ENCODE measurements at regions of chr7 and their contacts with region 1.

Region 1: GRCh38 chr7:101363734-101364374 is 1.2 kb downstream of the COL26A1 start:
- DNase-seq: peak; percentile 65
- ATAC-seq: peak; percentile 95
- H3K4me3 ChIP-seq: peak overlapping the region; percentile 69
- H3K27ac ChIP-seq: no peak overlapping the region
- H3K4me1 ChIP-seq: no peaks in the 10 kb centered on the region
- H3K27me3 ChIP-seq: no peaks in the 10 kb centered on the region
- CTCF ChIP-seq: peak; percentile 81

Region 2: DNA sequence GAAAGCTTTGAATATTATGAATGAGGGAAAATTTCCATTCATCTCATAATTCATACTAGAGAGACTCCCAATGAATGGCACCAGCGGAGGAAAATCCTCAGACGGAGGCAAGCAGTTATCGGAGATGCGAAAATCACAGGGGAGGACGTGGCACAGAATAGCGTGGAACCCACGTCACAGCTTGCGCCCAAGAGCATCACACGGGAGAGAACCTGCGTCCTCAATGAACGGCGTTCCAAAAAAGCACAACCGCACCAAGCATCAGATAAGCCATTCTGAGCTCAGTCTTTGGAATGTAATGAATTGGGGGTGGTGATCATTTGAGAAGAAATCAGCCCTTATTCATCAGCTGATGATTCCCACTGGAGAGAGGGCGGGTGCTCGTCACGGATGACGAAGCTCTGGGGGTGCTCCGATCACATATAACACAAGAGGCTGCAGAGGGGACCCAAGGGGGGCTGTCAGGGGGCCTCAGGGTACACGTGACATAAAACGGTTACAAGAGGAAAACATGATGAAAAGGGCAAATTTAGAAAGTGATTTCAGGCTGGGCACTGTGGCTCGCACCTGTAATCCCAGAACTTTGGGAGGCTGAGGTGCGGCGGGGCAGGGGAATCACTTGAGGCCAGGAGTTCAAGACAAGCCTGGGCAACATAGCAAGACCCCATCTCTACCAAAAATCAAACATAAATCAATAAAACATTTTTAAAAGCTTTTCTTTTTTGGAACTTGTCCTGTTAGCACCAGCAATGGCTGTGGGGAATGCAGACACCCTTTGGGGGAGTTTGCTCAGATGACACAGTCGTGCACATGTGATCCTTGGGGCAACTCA is 85.2 kb before region 1 on chr7:
- CTCF ChIA-PET with region 1: no interaction called
- POLR2A ChIA-PET with region 1: no interaction called
- intact Hi-C with region 1: no loop called
- DNase-seq: no peak
- ATAC-seq: no peak
- H3K4me3 ChIP-seq: no peak overlapping the region
- H3K27ac ChIP-seq: no peak overlapping the region
- H3K4me1 ChIP-seq: no peaks in the 10 kb centered on the region; the same call in 1 of the 2 replicates
- H3K27me3 ChIP-seq: no peaks in the 10 kb centered on the region
- CTCF ChIP-seq: no peak

Region 3: GRCh38 chr7:101507791-101508252 is 144.0 kb after region 1 on chr7:
- CTCF ChIA-PET with region 1: no interaction called
- POLR2A ChIA-PET with region 1: no interaction called
- intact Hi-C with region 1: loop called (anchors 2 kb)
- DNase-seq: peak; percentile 64
- ATAC-seq: no peak
- H3K4me3 ChIP-seq: no peak overlapping the region
- H3K27ac ChIP-seq: no peak overlapping the region
- H3K4me1 ChIP-seq: no peaks in the 10 kb centered on the region
- H3K27me3 ChIP-seq: no peaks in the 10 kb centered on the region
- CTCF ChIP-seq: peak; percentile 95

Region 4: GRCh38 chr7:101542527-101543241 is 178.8 kb after region 1 on chr7:
- CTCF ChIA-PET with region 1: no interaction called
- POLR2A ChIA-PET with region 1: no interaction called
- intact Hi-C with region 1: loop called (anchors 2 kb)
- DNase-seq: peak; percentile 75
- ATAC-seq: peak; percentile 62
- H3K4me3 ChIP-seq: no peak overlapping the region
- H3K27ac ChIP-seq: no peak overlapping the region
- H3K4me1 ChIP-seq: no peaks in the 10 kb centered on the region
- H3K27me3 ChIP-seq: no peaks in the 10 kb centered on the region
- CTCF ChIP-seq: peak; percentile 88